Psoas muscle (tissue), 8 donors: ENCODE measurements at regions of chr1 and their contacts with region 1.

Region 1: GRCh38 chr1:162886705-162887104 is 25.7 kb upstream of the CCDC190 start:
- DNase-seq: no peak
- ATAC-seq: no peak
- H3K4me3 ChIP-seq: no peak overlapping the region
- H3K27ac ChIP-seq: no peak overlapping the region
- H3K4me1 ChIP-seq: peaks cover 10% of the 10 kb centered on the region
- H3K27me3 ChIP-seq: no peaks in the 10 kb centered on the region
- CTCF ChIP-seq: no peak

Region 2: GRCh38 chr1:162823771-162824525 is 62.8 kb before region 1 on chr1:
- intact Hi-C with region 1: no loop called
- DNase-seq: no peak
- ATAC-seq: no peak
- H3K4me3 ChIP-seq: no peak overlapping the region
- H3K27ac ChIP-seq: no peak overlapping the region
- H3K4me1 ChIP-seq: peaks cover 4% of the 10 kb centered on the region
- H3K27me3 ChIP-seq: peaks cover 3 to 22% (median 4%) of the 10 kb centered on the region in 3 donors
- CTCF ChIP-seq: no peak

Region 3: GRCh38 chr1:162861101-162861500 is 25.6 kb before region 1 on chr1 and contains the start of gene CCDC190:
- intact Hi-C with region 1: loop called in 1 of 2 experiments (anchors 2 kb)
- DNase-seq: no peak
- ATAC-seq: peak in 3 of 4 donors; percentile 63 to 90 (median 66)
- H3K4me3 ChIP-seq: no peak within 1 kb of the TSS
- H3K27ac ChIP-seq: no peak within 1 kb of the TSS
- H3K4me1 ChIP-seq: no peaks in the 10 kb centered on the region
- H3K27me3 ChIP-seq: no peaks in the 10 kb centered on the region
- CTCF ChIP-seq: no peak
- total RNA-seq, gene CCDC190: not detected